ENCODE measurements at regions of chr5 and their contacts with region 1.

Region 1: GRCh38 chr5:81194633-81195333 is 38.3 kb upstream of the CKMT2 start:
- DNase-seq: peak; percentile 12
- H3K4me3 ChIP-seq: peak overlapping the region; percentile 34
- CTCF ChIP-seq: peak; percentile 95

Region 2: GRCh38 chr5:80686757-80687156 is 508.0 kb before region 1 on chr5:
- CTCF ChIA-PET with region 1: interaction called, 138 read pairs
- POLR2A ChIA-PET with region 1: no interaction called
- DNase-seq: no peak
- H3K4me3 ChIP-seq: no peak overlapping the region
- CTCF ChIP-seq: no peak

Region 3: DNA sequence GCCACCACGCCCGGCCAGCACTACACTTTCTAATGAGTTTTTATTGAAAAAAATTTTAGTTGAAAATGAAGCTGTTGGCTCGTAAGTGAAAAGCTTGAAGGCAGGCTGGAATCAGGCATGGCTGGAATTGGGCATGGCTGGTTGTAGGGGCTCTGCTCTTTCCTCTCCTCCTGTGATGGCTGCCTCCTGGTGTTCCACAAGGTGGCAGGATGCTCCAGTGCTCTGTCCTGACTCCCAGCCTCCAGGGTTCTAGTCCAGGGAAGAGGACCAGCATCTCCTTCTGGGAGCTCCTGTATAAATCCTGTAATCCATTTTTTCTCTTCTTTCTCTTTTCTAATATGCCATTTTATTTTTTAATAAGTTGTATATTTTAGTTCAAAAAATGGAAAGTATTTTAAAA is 482.8 kb before region 1 on chr5:
- CTCF ChIA-PET with region 1: interaction called, 28 read pairs
- POLR2A ChIA-PET with region 1: no interaction called
- DNase-seq: no peak
- H3K4me3 ChIP-seq: no peak overlapping the region
- CTCF ChIP-seq: peak; percentile 55

Region 4: DNA sequence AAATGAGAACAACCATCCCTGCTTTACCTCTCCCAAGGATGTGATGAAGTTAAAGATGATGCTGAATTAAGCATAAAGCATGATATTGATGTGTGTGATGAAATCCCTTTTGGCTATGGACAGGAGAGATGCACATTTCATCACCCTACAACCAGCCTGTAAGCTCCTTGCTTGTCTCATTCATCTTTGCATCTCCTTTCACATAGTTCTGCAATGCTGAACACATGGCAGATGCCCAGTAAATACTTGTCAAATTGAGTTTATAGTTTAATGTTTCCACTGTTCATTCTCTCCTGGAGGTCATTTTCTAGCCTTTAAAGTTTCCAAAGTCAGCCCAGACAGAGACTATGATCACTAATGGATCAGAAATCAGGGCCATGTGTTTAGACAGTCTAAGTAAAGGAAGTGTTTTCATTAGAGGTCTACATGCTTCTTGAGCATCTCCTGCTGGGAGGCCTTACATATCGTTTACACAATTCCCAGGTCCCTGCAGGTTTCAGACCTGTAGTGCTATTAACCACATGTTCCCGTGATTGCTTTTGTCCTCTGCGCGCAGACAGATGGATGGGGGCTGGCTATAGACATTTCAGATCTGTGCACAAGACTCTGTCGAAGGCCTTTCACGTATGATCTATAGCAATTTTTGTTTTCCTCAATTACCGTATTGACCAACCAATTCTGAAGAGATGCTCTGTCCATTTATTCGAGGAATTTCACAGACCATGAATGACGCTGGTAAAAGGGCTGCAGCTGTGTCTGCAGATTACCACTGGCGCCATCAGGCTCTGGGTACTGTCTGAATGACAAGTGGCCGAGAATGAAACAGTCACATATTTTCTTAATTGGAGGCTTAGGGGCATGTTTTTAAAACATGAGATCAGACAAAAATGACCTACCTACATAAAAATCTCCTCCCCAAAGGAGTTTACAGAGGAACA is 10.7 kb before region 1 on chr5:
- CTCF ChIA-PET with region 1: interaction called, 24 read pairs
- POLR2A ChIA-PET with region 1: no interaction called
- DNase-seq: no peak
- H3K4me3 ChIP-seq: no peak overlapping the region
- CTCF ChIP-seq: no peak

Region 5: GRCh38 chr5:81301271-81302015 is 106.7 kb after region 1 on chr5 and contains the start of gene ZCCHC9:
- CTCF ChIA-PET with region 1: interaction called, 10 read pairs
- POLR2A ChIA-PET with region 1: no interaction called
- DNase-seq: peak; percentile 76
- H3K4me3 ChIP-seq: peak within 1 kb of the TSS; percentile 98
- CTCF ChIP-seq: peak; percentile 22